GM12878 (cell line): ENCODE measurements at regions of chr17 and their contacts with region 1.

Region 1: DNA sequence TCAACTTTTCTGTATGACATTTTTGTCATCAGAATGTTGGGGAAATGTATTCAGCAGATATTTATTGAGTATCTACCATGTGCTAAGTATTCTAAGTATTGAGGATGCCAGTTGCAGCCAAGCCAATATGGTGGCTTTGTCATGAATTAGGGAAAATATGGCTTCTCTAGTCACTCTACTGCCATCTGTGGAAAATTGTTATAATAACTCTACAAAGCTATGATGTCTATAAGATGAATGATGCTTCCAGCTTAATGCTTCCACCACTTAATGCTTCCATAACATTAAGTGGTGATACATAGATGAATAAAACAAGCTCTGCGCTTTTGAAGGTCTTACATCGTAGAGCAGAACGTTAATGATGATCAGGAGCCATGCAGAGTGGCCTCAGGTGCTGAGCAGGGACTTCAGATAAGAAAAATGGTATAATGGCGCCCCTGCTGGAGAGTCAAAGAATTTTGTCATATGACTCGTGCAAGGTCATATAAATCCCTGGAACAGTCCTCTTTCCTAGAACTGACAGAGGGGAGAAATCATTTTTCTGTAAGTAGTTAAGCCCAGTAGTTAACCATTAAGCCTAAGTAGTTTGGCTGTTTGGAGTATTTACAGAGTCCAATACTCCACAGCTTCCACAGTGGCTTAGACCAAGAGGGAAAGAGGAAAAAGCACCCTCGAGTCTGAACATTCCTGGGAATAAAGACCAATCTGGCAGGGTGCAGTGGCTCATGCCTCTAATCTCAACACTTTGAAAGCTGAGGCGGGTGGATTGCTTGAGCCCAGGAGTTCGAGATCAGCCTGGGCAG is 2.7 kb upstream of the TMIGD1 start:
- DNase-seq: no peak
- ATAC-seq: peak; percentile 58
- H3K4me3 ChIP-seq: no peak overlapping the region
- H3K27ac ChIP-seq: no peak overlapping the region
- H3K4me1 ChIP-seq: peaks cover 12% of the 10 kb centered on the region
- H3K27me3 ChIP-seq: no peaks in the 10 kb centered on the region
- CTCF ChIP-seq: peak; percentile 57 to 86 (median 63); a peak in 5 of 6 replicates
- EP300 ChIP-seq: no peak
- POLR2A ChIP-seq: no peak
- RAD21 ChIP-seq: peak; percentile 78

Region 2: GRCh38 chr17:30116661-30117551 is 219.7 kb before region 1 on chr17 and contains the start of gene NSRP1:
- CTCF ChIA-PET with region 1: interaction called, 204 read pairs
- POLR2A ChIA-PET with region 1: interaction called, 3 read pairs
- RAD21 ChIA-PET with region 1: interaction called, 11 read pairs
- SMC1A ChIA-PET with region 1: interaction called, 32 read pairs
- in situ Hi-C with region 1: no loop called
- intact Hi-C with region 1: no loop called
- DNase-seq: peak; percentile 89
- ATAC-seq: peak; percentile 91
- H3K4me3 ChIP-seq: peak within 1 kb of the TSS; percentile 95
- H3K27ac ChIP-seq: peak within 1 kb of the TSS; percentile 94
- H3K4me1 ChIP-seq: peaks cover 9% of the 10 kb centered on the region
- H3K27me3 ChIP-seq: no peaks in the 10 kb centered on the region
- CTCF ChIP-seq: no peak
- EP300 ChIP-seq: no peak
- POLR2A ChIP-seq: peak; percentile 100
- RAD21 ChIP-seq: no peak
- polyA plus RNA-seq, gene NSRP1: 57.2 to 69.7 TPM

Region 3: GRCh38 chr17:30212750-30213149 is 123.8 kb before region 1 on chr17:
- CTCF ChIA-PET with region 1: interaction called, 6 read pairs
- POLR2A ChIA-PET with region 1: no interaction called
- RAD21 ChIA-PET with region 1: interaction called, 11 read pairs
- SMC1A ChIA-PET with region 1: interaction called, 7 read pairs
- in situ Hi-C with region 1: no loop called
- intact Hi-C with region 1: no loop called
- DNase-seq: peak; percentile 72
- ATAC-seq: peak; percentile 91
- H3K4me3 ChIP-seq: peak overlapping the region; percentile 19; the same call in 1 of the 2 replicates
- H3K27ac ChIP-seq: peak overlapping the region; percentile 85
- H3K4me1 ChIP-seq: peaks cover 36% of the 10 kb centered on the region
- H3K27me3 ChIP-seq: no peaks in the 10 kb centered on the region
- CTCF ChIP-seq: peak; percentile 0 to 47 (median 34); a peak in 3 of 6 replicates
- EP300 ChIP-seq: peak; percentile 32 to 50; a peak in 2 of 4 replicates
- POLR2A ChIP-seq: peak; percentile 49; the same call in 1 of the 2 replicates
- RAD21 ChIP-seq: 0 out of 2 replicates have a peak, but pooled peaks have one; percentile 29

Region 4: DNA sequence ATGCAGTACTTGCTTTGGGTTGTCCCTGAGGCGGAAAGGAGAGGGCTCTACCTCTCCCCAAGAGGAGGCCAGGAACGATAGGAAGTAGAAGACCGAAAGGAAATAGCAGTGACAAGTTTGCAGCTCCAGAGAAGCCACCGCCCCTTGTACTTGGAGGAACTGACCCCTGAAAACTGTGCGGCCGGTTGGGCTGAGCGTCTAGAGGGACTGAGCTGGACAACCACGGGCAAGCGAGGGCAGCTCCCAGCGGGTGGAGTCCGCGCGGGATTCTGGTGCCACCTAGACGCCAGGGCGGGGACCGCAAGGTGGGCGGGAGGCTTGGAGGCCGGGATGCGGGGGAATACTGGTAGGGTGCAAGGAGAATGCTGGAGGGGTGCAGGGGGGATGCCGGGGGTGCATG is 99.8 kb before region 1 on chr17:
- CTCF ChIA-PET with region 1: interaction called, 13 read pairs
- POLR2A ChIA-PET with region 1: no interaction called
- RAD21 ChIA-PET with region 1: interaction called, 5 read pairs
- SMC1A ChIA-PET with region 1: interaction called, 14 read pairs
- in situ Hi-C with region 1: no loop called
- intact Hi-C with region 1: loop called (anchors 10 kb)
- DNase-seq: no peak
- ATAC-seq: peak; percentile 75
- H3K4me3 ChIP-seq: no peak overlapping the region
- H3K27ac ChIP-seq: no peak overlapping the region
- H3K4me1 ChIP-seq: peaks cover 29% of the 10 kb centered on the region
- H3K27me3 ChIP-seq: no peaks in the 10 kb centered on the region
- CTCF ChIP-seq: peak; percentile 38 to 70 (median 65)
- EP300 ChIP-seq: no peak
- POLR2A ChIP-seq: no peak
- RAD21 ChIP-seq: peak; percentile 80

Region 5: DNA sequence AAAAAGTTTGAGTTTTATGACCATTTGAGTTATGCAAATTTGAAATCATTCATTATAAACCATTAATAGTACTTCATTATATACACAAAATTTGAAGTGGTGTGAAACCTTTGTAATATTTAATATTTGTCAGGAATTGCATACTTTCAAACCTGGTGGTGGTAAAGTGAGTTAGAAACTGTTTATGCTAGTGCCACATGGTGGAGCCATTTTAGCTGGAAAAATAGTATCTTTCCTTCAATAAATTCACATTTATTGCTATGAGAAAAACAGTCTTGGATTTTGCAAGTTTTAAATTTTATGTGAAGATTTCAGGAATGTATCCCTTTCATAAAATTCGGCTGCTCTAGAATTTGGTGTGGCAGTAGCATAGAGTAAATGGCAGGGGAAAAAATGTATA is 37.6 kb before region 1 on chr17:
- CTCF ChIA-PET with region 1: interaction called, 8 read pairs
- POLR2A ChIA-PET with region 1: no interaction called
- RAD21 ChIA-PET with region 1: interaction called, 7 read pairs
- SMC1A ChIA-PET with region 1: interaction called, 11 read pairs
- in situ Hi-C with region 1: no loop called
- intact Hi-C with region 1: no loop called
- DNase-seq: no peak
- ATAC-seq: no peak
- H3K4me3 ChIP-seq: no peak overlapping the region
- H3K27ac ChIP-seq: no peak overlapping the region
- H3K4me1 ChIP-seq: peaks cover 7% of the 10 kb centered on the region
- H3K27me3 ChIP-seq: no peaks in the 10 kb centered on the region
- CTCF ChIP-seq: no peak
- EP300 ChIP-seq: no peak
- POLR2A ChIP-seq: no peak
- RAD21 ChIP-seq: no peak

Region 6: DNA sequence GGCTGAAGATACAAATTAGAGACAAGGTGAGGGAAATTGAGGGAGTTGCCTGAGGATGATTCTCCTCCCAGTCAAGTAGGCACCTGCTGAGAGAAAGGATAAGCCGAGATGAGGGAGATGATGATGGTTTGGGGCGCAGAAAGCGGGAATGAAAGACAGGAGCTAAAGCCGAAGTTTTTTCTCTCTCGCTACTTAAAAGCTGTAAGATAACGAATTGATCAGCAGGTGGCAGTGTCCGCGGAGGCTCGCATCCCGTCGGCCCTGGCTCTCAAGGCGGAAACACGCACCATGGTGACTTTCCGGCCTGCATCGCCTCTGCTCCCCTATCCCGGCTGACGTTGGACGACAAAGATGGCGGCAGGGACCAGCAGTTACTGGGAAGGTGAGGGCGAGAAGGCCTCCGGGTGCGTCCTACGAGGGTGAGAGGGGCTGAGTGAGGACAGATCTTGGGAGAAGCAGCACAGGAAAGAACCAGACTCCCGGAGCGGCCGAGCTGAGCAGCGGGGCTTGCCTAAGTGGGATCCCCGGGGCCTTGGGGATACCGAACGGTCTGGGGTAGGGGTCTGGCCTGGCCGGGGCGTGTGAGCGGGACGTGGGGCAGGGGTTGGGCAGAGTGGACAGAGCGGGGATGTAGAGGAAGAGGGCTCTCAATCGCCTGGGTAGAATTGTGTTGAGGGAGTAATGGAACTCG is 140.7 kb after region 1 on chr17 and contains the start of gene GOSR1:
- CTCF ChIA-PET with region 1: interaction called, 45 read pairs
- POLR2A ChIA-PET with region 1: interaction called, 3 read pairs
- RAD21 ChIA-PET with region 1: interaction called, 19 read pairs
- SMC1A ChIA-PET with region 1: interaction called, 34 read pairs
- in situ Hi-C with region 1: no loop called
- intact Hi-C with region 1: loop called (anchors 1 kb)
- DNase-seq: peak; percentile 79
- ATAC-seq: peak; percentile 99
- H3K4me3 ChIP-seq: peak within 1 kb of the TSS; percentile 93
- H3K27ac ChIP-seq: peak within 1 kb of the TSS; percentile 99
- H3K4me1 ChIP-seq: peaks cover 7% of the 10 kb centered on the region
- H3K27me3 ChIP-seq: no peaks in the 10 kb centered on the region
- CTCF ChIP-seq: peak; percentile 72 to 88 (median 83)
- EP300 ChIP-seq: no peak
- POLR2A ChIP-seq: peak; percentile 100
- RAD21 ChIP-seq: peak; percentile 57
- polyA plus RNA-seq, gene GOSR1: 71.0 to 99.3 TPM